Activated CD4-positive, alpha-beta memory T cell treated with anti-CD3 and anti-CD28 coated beads for 36 hours (primary cell): ENCODE measurements at regions of chr16 and their contacts with region 1.

Region 1: DNA sequence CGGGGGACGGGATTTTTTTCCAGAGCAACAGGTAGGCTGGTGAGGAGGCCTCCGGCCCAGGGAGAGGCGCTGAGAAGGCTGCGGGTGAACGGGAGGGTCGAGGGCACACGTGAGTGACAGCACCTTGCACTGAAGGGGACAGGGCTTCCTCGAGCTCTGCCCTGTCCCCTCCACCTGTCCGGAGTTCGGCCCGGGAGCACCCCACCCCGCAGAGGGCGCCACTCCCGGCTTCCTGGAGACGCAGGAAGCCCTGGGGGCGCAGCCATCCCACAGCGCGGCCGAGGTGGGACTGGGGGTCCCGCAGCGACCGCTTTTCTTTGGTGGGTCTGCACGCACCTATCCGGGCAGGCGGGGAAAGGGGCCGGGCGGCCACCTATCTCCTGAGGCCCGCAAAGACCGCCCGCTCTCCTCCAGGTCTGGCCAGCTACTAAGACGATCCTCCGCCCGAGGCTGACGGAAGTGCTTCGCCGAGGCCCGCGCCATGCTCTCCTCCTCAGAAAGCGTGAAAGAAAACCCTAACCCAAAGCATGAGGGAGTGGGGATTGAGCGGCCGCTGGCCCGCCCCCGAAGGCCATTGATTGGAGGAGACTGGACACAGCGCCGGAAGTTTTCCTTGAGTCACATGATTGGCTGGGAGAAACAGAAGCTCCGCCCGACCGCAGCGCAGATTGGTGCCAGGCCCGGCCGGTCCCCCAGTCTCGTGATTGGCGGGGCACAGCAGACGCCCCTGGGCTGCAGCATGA is 34.3 kb downstream of the DDX19A start:
- DNase-seq: peak; percentile 98
- H3K4me3 Mint-ChIP-seq: peak overlapping the region; percentile 90
- H3K27ac Mint-ChIP-seq: peak overlapping the region; percentile 91
- H3K4me1 Mint-ChIP-seq: peaks cover 12% of the 10 kb centered on the region
- H3K27me3 Mint-ChIP-seq: no peaks in the 10 kb centered on the region

Region 2: GRCh38 chr16:70258065-70258464 is 123.0 kb before region 1 on chr16:
- CTCF ChIA-PET with region 1: no interaction called
- POLR2A ChIA-PET with region 1: no interaction called
- intact Hi-C with region 1: no loop called
- DNase-seq: no peak
- H3K4me3 Mint-ChIP-seq: no peak overlapping the region
- H3K27ac Mint-ChIP-seq: no peak overlapping the region
- H3K4me1 Mint-ChIP-seq: no peaks in the 10 kb centered on the region
- H3K27me3 Mint-ChIP-seq: no peaks in the 10 kb centered on the region

Region 3: DNA sequence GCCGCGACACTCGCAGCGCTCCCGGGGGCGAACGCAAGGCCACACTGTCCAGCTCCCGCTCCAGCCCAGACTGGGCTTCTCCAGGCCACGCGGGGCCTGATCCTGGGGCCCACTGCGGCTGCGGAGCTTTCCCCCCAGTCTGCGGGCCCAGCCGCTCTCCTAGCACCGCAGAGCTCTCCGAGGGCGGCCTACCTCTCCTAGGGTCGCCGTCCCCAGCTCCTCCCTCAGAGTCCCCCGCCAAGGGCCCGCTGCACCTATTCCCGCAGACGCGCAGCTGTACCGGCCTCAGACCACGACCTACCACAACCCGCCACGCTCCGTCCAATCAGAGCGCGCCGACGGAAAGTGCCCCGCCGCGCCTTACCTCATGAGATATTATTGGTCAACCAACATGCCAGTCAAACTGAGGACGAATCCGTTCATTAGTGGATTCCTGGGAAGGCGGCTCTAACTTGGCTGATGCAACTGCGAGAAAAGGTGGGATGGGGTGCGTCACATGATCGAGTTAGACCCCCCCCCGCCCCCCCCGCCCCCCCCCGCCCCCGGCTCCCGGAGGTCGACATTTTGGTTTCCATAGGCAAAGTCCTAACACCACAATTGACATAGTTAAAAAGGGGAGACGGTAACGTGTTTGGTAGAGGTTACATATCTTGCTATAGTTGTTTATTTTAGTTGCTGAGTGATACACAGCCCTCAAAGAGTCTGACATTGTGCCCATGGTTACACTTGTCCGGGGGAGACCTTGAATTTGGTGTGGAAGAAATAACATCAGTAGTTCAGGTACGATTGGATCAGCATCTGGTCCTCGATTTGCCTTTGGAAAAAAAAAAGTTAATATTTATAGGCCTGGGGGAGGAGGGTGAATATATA is 91.6 kb before region 1 on chr16 and contains the start of gene AARS1:
- CTCF ChIA-PET with region 1: no interaction called
- POLR2A ChIA-PET with region 1: interaction called, 16 read pairs
- intact Hi-C with region 1: no loop called
- DNase-seq: peak; percentile 97
- H3K4me3 Mint-ChIP-seq: peak within 1 kb of the TSS; percentile 98
- H3K27ac Mint-ChIP-seq: peak within 1 kb of the TSS; percentile 98
- H3K4me1 Mint-ChIP-seq: peaks cover 31% of the 10 kb centered on the region
- H3K27me3 Mint-ChIP-seq: peaks cover 2% of the 10 kb centered on the region
- total RNA-seq, gene AARS1: 165 to 170 TPM

Region 4: DNA sequence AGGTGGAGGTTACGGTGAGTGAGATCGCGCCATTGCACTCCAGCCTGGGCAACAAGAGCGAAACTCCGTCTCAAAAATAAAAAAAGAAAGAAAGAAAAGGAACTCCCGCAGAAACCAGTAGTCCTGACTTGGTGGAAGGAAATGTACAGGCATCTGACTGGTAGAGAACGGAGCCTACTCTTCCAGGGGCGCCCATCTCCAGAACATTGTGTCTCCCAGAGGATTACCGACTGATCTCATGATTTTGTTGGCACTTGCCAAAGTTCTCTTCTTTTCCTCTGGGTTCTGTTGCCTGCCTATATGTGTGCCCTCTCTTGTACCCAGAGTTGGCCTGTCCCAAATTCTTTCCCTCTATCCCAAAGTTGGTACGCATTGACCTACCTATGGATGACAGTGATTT is 10.1 kb before region 1 on chr16:
- CTCF ChIA-PET with region 1: interaction called, 17 read pairs
- POLR2A ChIA-PET with region 1: no interaction called
- intact Hi-C with region 1: no loop called
- DNase-seq: no peak
- H3K4me3 Mint-ChIP-seq: no peak overlapping the region
- H3K27ac Mint-ChIP-seq: no peak overlapping the region
- H3K4me1 Mint-ChIP-seq: peaks cover 6% of the 10 kb centered on the region
- H3K27me3 Mint-ChIP-seq: no peaks in the 10 kb centered on the region

Region 5: GRCh38 chr16:70402916-70403659 is 22.1 kb after region 1 on chr16:
- CTCF ChIA-PET with region 1: no interaction called
- POLR2A ChIA-PET with region 1: interaction called, 4 read pairs
- intact Hi-C with region 1: loop called (anchors 1 kb)
- DNase-seq: no peak
- H3K4me3 Mint-ChIP-seq: no peak overlapping the region
- H3K27ac Mint-ChIP-seq: peak overlapping the region; percentile 2
- H3K4me1 Mint-ChIP-seq: peaks cover 39% of the 10 kb centered on the region
- H3K27me3 Mint-ChIP-seq: no peaks in the 10 kb centered on the region

Region 6: GRCh38 chr16:70438969-70439862 is 58.2 kb after region 1 on chr16 and contains the start of gene ST3GAL2:
- CTCF ChIA-PET with region 1: no interaction called
- POLR2A ChIA-PET with region 1: interaction called, 5 read pairs
- intact Hi-C with region 1: loop called (anchors 1 kb)
- DNase-seq: peak; percentile 96
- H3K4me3 Mint-ChIP-seq: peak within 1 kb of the TSS; percentile 94
- H3K27ac Mint-ChIP-seq: peak within 1 kb of the TSS; percentile 76
- H3K4me1 Mint-ChIP-seq: peaks cover 31% of the 10 kb centered on the region
- H3K27me3 Mint-ChIP-seq: no peaks in the 10 kb centered on the region
- total RNA-seq, gene ST3GAL2: 16.7 to 17.3 TPM

Region 7: DNA sequence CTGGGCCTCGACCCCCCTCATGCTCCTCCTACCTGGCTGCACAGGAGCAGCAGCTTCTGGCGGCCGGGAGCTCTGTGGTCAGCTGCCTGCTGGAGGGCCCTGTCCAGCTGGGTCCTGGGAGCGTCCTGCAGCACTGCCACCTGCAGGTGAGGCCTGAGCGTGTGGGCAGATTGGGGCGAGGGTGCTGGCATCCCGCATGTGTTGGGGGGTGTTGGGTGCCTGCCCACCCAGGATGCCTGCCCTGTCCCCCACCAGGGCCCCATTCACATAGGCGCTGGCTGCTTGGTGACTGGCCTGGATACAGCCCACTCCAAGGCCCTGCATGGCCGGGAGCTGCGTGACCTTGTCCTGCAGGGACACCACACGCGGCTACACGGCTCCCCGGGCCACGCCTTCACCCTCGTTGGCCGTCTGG is 89.9 kb after region 1 on chr16:
- CTCF ChIA-PET with region 1: no interaction called
- POLR2A ChIA-PET with region 1: no interaction called
- intact Hi-C with region 1: loop called (anchors 1 kb)
- DNase-seq: no peak
- H3K4me3 Mint-ChIP-seq: no peak overlapping the region
- H3K27ac Mint-ChIP-seq: no peak overlapping the region
- H3K4me1 Mint-ChIP-seq: peaks cover 4% of the 10 kb centered on the region
- H3K27me3 Mint-ChIP-seq: no peaks in the 10 kb centered on the region

Region 8: DNA sequence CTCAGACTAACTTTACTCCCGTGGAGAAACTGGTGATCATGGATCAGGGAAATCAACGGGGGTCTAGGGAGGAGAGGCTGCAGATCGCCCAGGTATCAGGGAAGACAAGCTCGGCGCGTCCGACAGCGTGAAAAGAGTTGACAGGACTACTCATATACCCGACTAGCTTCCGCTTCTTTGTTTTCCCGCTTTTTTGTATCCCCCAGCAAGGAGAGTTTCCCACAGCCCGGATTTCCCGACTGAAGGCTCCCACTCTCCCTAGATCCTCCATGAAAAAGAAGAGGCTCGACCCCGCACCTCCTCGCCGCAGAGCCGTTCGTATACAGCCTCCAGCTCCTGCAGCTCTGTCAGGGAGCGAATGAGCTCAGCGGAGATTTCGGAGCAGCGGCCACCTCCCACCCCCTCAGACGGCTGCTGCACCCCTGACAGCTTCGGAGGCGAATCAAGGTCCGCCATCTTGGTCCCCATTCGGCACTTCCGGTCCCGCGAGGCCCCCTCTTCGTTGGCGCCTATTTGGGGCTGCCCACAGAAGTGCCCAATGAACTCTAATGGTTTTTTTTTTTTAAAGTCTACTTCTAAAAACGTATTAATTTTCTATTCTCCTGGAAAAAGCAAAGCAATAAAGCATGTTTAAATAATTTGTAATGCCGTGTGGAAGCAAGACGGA is 142.2 kb after region 1 on chr16 and contains the start of gene COG4:
- CTCF ChIA-PET with region 1: interaction called, 7 read pairs
- POLR2A ChIA-PET with region 1: interaction called, 18 read pairs
- intact Hi-C with region 1: loop called (anchors 1 kb)
- DNase-seq: peak; percentile 95
- H3K4me3 Mint-ChIP-seq: peak within 1 kb of the TSS; percentile 91
- H3K27ac Mint-ChIP-seq: peak within 1 kb of the TSS; percentile 98
- H3K4me1 Mint-ChIP-seq: peaks cover 48% of the 10 kb centered on the region
- H3K27me3 Mint-ChIP-seq: no peaks in the 10 kb centered on the region
- total RNA-seq, gene COG4: 35.9 to 40.2 TPM